ENCODE measurements at regions of chr1 and their contacts with region 1.

Region 1: GRCh38 chr1:23979878-23980724 is at the start of gene SRSF10:
- DNase-seq: peak; percentile 98
- ATAC-seq: peak; percentile 99
- total RNA-seq, gene SRSF10: 51.9 TPM

Region 2: GRCh38 chr1:24018611-24019580 is 38.8 kb after region 1 on chr1:
- intact Hi-C with region 1: loop called (anchors 2 kb)
- DNase-seq: peak; percentile 95
- ATAC-seq: peak; percentile 94

Region 3: GRCh38 chr1:24027838-24028468 is 47.9 kb after region 1 on chr1:
- intact Hi-C with region 1: loop called (anchors 2 kb)
- DNase-seq: no peak
- ATAC-seq: peak; percentile 59